ENCODE measurements at regions of chr11 and their contacts with region 1.

Region 1: DNA sequence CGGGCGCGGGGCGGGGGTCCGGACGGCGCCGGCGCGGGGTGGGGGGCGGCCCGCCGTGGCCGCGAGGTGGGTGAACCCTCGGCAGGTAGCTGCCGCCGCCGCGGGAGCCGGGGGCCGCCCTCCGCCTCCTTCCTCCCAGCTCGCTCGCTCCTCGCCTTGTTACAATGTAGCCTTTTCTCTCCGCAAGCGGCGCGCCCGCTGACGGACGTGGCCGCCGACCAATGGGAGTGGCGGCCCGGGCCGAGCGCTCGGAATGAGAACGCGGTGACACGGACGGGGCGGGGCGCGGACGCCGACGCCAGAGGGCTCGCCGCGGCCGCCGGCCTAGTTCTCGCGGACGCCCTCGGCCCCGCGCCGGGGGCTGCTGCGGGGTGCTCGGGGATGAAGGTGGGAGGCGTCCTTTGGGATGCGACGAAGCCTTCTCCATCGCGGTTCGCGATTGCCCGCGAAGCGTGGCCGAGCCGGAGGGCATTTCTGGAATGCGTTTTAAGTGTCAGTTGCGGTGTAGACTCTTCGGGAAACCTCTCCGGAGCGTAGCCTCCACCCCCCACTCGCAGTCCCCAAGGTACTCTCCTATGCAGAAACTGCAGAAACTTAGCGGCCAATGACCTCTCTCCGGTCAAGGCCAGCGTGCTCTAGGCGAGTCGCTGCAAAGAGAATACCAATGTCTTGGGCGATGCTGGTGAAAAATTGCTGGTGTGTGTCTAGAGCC is 734 bp downstream of the PRDM11 start:
- DNase-seq: peak; percentile 84 to 96 (median 91)
- ATAC-seq: peak; percentile 96
- H3K4me3 ChIP-seq: peak overlapping the region; percentile 78 to 89
- H3K4me3 Mint-ChIP-seq: peak overlapping the region; percentile 84
- H3K27ac ChIP-seq: peak overlapping the region; percentile 52 to 70
- H3K27ac Mint-ChIP-seq: peak overlapping the region; percentile 89
- H3K4me1 ChIP-seq: peaks cover 16% of the 10 kb centered on the region
- H3K4me1 Mint-ChIP-seq: peaks cover 38% of the 10 kb centered on the region
- H3K27me3 ChIP-seq: no peaks in the 10 kb centered on the region
- H3K27me3 Mint-ChIP-seq: peaks cover 10% of the 10 kb centered on the region
- CTCF ChIP-seq: no peak

Region 2: DNA sequence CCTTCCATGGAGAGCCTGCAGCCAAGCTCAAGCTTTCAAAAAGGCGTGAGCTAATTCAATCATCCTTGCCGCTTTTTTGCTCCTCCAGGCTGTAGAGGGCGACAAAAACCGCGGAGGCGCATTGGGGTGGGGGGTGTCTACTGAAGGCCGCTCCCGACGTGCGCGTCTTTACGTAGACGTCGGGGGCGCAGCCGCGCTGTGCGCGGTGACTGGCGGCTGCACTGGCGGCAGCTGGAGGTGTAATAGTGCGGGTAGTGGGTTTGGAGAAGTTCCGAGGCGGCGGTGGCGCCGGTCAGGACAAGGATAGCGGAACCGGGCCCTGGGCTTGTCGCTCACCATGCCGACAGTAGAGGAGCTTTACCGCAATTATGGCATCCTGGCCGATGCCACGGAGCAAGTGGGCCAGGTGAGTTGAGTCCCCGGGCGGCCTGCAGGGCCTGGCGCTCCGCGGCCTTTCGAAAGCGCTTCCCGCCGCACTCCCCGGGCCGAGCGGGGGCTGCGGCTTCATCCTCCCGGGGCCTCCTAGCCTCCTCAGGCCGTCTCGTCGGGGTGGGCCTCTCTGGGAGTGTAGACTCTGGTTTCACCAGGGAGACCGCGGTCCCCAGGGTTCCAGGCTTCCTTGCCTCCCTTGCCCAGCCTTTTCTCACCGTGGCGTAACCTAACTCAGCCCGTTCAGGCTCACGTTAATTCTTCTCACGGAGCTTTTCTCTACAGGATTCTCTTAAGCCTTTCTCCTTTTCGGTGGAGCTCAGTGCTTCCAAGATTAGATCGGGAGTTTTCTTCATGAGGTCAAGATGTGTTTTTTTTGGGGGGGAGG is 1835.2 kb before region 1 on chr11 and contains the start of gene API5:
- CTCF ChIA-PET with region 1: no interaction called
- POLR2A ChIA-PET with region 1: no interaction called
- intact Hi-C with region 1: loop called (anchors 5 kb)
- DNase-seq: peak; percentile 84 to 96 (median 93)
- ATAC-seq: peak; percentile 94
- H3K4me3 ChIP-seq: peak within 1 kb of the TSS; percentile 84 to 85
- H3K4me3 Mint-ChIP-seq: peak within 1 kb of the TSS; percentile 92
- H3K27ac ChIP-seq: peak within 1 kb of the TSS; percentile 64 to 75
- H3K27ac Mint-ChIP-seq: peak within 1 kb of the TSS; percentile 88
- H3K4me1 ChIP-seq: peaks cover 34% of the 10 kb centered on the region
- H3K4me1 Mint-ChIP-seq: peaks cover 50% of the 10 kb centered on the region
- H3K27me3 ChIP-seq: no peaks in the 10 kb centered on the region
- H3K27me3 Mint-ChIP-seq: no peaks in the 10 kb centered on the region
- CTCF ChIP-seq: peak; percentile 63
- total RNA-seq, gene API5: 78.4 to 80.6 TPM

Region 3: GRCh38 chr11:44565211-44565952 is 581.8 kb before region 1 on chr11 and contains the start of gene CD82:
- CTCF ChIA-PET with region 1: no interaction called
- POLR2A ChIA-PET with region 1: no interaction called
- intact Hi-C with region 1: loop called (anchors 2 to 5 kb)
- DNase-seq: peak; percentile 88 to 98 (median 95)
- ATAC-seq: peak; percentile 73
- H3K4me3 ChIP-seq: peak within 1 kb of the TSS; percentile 86 to 89
- H3K4me3 Mint-ChIP-seq: peak within 1 kb of the TSS; percentile 82
- H3K27ac ChIP-seq: peak within 1 kb of the TSS; percentile 33 to 71
- H3K27ac Mint-ChIP-seq: peak within 1 kb of the TSS; percentile 82
- H3K4me1 ChIP-seq: peaks cover 47% of the 10 kb centered on the region
- H3K4me1 Mint-ChIP-seq: peaks cover 53% of the 10 kb centered on the region
- H3K27me3 ChIP-seq: no peaks in the 10 kb centered on the region
- H3K27me3 Mint-ChIP-seq: no peaks in the 10 kb centered on the region
- CTCF ChIP-seq: peak; percentile 39
- total RNA-seq, gene CD82: 28.1 to 32.4 TPM

Region 4: DNA sequence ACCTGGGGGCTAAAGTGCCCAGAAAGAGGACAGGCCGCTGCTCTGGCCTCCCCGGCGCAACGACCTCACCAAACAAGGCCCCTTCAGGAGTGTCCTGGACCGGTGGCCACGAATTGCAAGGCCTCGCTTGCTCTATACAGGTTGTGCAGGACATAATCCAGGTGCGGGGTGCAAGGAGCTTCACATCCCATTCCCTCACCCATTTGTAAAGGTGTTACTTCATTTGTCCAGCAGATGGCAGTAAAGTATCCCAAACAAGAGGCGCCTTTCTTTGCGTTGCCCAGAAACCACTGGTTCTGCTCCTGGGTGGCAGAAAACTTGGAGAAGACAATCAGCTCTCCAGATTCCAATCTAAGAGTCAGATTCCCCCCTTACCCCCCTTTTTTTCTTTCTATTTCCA is 36.6 kb before region 1 on chr11:
- CTCF ChIA-PET with region 1: interaction called, 13 read pairs
- POLR2A ChIA-PET with region 1: no interaction called
- intact Hi-C with region 1: no loop called
- DNase-seq: peak in 5 of 9 experiments; percentile 35 to 80 (median 59)
- ATAC-seq: peak; percentile 73
- H3K4me3 ChIP-seq: no peak overlapping the region
- H3K4me3 Mint-ChIP-seq: no peak overlapping the region
- H3K27ac ChIP-seq: no peak overlapping the region
- H3K27ac Mint-ChIP-seq: no peak overlapping the region
- H3K4me1 ChIP-seq: no peaks in the 10 kb centered on the region
- H3K4me1 Mint-ChIP-seq: no peaks in the 10 kb centered on the region
- H3K27me3 ChIP-seq: no peaks in the 10 kb centered on the region
- H3K27me3 Mint-ChIP-seq: peaks cover 45% of the 10 kb centered on the region
- CTCF ChIP-seq: peak; percentile 75

Region 5: GRCh38 chr11:45267052-45267451 is 119.9 kb after region 1 on chr11:
- CTCF ChIA-PET with region 1: no interaction called
- POLR2A ChIA-PET with region 1: no interaction called
- intact Hi-C with region 1: no loop called
- DNase-seq: peak in 3 of 9 experiments; percentile 8 to 12 (median 12)
- ATAC-seq: no peak
- H3K4me3 ChIP-seq: no peak overlapping the region
- H3K4me3 Mint-ChIP-seq: no peak overlapping the region
- H3K27ac ChIP-seq: no peak overlapping the region
- H3K27ac Mint-ChIP-seq: no peak overlapping the region
- H3K4me1 ChIP-seq: no peaks in the 10 kb centered on the region
- H3K4me1 Mint-ChIP-seq: no peaks in the 10 kb centered on the region
- H3K27me3 ChIP-seq: peaks cover 0 to 6% of the 10 kb centered on the region in 2 experiments
- H3K27me3 Mint-ChIP-seq: peaks cover 45% of the 10 kb centered on the region
- CTCF ChIP-seq: no peak

Region 6: GRCh38 chr11:45354976-45355705 is 208.0 kb after region 1 on chr11:
- CTCF ChIA-PET with region 1: no interaction called
- POLR2A ChIA-PET with region 1: no interaction called
- intact Hi-C with region 1: loop called (anchors 1 to 2 kb)
- DNase-seq: peak; percentile 80 to 95 (median 89)
- ATAC-seq: peak; percentile 96
- H3K4me3 ChIP-seq: peak overlapping the region; percentile 66 to 72
- H3K4me3 Mint-ChIP-seq: peak overlapping the region; percentile 80
- H3K27ac ChIP-seq: peak overlapping the region; percentile 48 to 68
- H3K27ac Mint-ChIP-seq: peak overlapping the region; percentile 80
- H3K4me1 ChIP-seq: peaks cover 13% of the 10 kb centered on the region
- H3K4me1 Mint-ChIP-seq: peaks cover 14% of the 10 kb centered on the region
- H3K27me3 ChIP-seq: no peaks in the 10 kb centered on the region
- H3K27me3 Mint-ChIP-seq: peaks cover 5% of the 10 kb centered on the region
- CTCF ChIP-seq: no peak

Region 7: GRCh38 chr11:45804761-45805304 is 657.7 kb after region 1 on chr11 and contains the start of gene SLC35C1:
- CTCF ChIA-PET with region 1: no interaction called
- POLR2A ChIA-PET with region 1: no interaction called
- intact Hi-C with region 1: loop called in 1 of 2 experiments (anchors 10 kb)
- DNase-seq: peak; percentile 89 to 98 (median 97)
- ATAC-seq: peak; percentile 96
- H3K4me3 ChIP-seq: peak within 1 kb of the TSS; percentile 97
- H3K4me3 Mint-ChIP-seq: peak within 1 kb of the TSS; percentile 90
- H3K27ac ChIP-seq: peak within 1 kb of the TSS; percentile 76 to 81
- H3K27ac Mint-ChIP-seq: peak within 1 kb of the TSS; percentile 81
- H3K4me1 ChIP-seq: peaks cover 32% of the 10 kb centered on the region
- H3K4me1 Mint-ChIP-seq: peaks cover 44% of the 10 kb centered on the region
- H3K27me3 ChIP-seq: no peaks in the 10 kb centered on the region
- H3K27me3 Mint-ChIP-seq: no peaks in the 10 kb centered on the region
- CTCF ChIP-seq: no peak
- total RNA-seq, gene SLC35C1: 3.1 to 3.3 TPM

Measured in CD8-positive, alpha-beta T cell (primary cell).